Naive thymus-derived CD4-positive, alpha-beta T cell (primary cell): ENCODE measurements at regions of chrX and their contacts with region 1.

Region 1: DNA sequence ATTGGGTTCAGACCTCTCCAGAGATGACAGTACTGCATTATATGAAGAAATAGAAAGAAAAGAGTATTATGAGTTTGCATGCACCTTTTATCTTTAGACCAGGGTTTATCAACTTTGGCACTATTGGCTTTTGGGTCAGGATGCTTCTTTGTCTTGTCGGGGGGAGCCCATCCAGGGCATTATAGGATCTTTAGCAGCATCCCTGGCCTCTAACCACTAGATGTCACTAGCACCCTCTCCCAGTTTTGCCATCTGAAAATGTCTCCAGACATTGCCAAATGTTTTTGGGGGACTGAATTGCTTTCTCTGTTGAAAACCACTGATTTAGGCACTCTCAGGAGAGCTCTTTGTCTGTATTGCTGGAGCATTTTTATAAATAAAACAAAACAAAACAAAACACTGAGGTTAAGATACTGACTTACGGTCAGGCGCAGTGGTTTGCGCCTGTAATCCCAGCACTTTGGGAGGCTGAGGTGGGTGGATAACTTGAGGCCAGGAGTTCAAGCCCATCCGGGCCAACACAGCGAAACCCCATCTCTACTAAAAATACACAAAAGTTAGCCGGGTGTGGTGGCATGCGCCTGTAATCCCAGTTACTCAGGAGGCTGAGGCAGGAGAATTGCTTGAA is 23.6 kb downstream of the CA5B start:
- DNase-seq: peak in 7 of 9 donors; percentile 6 to 54 (median 43)
- ATAC-seq: peak; percentile 75
- H3K4me3 ChIP-seq: no peak overlapping the region
- H3K4me3 Mint-ChIP-seq: no peak overlapping the region
- H3K27ac ChIP-seq: peak overlapping the region; percentile 6
- H3K27ac Mint-ChIP-seq: peak overlapping the region in 8 of 9 donors; percentile 37 to 77 (median 68)
- H3K4me1 ChIP-seq: peaks cover 13 to 18% of the 10 kb centered on the region in 2 donors
- H3K4me1 Mint-ChIP-seq: peaks cover 11 to 49% (median 31%) of the 10 kb centered on the region in 7 donors
- H3K27me3 ChIP-seq: no peaks in the 10 kb centered on the region
- H3K27me3 Mint-ChIP-seq: no peaks in the 10 kb centered on the region

Region 2: DNA sequence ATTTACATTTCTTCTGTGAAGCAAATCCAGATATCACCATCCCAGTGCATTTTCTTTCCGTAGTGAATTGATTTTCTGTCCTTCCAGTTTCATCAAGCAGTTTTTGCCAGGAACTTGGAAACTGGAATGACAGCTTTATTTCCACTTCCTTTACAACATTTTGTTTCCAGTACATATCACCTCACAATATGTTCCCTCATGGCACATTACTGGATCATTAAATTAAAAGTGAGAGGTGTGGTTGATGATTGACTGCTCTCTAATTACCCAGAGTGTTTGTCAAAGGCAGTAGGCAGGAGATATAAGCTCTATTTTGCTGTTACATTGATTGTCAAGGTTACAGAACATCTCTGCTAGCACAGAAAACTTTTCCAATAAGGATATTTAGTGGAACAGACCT is 138.6 kb before region 1 on chrX:
- CTCF ChIA-PET with region 1: no interaction called
- POLR2A ChIA-PET with region 1: no interaction called
- intact Hi-C with region 1: no loop called
- DNase-seq: no peak
- ATAC-seq: no peak
- H3K4me3 ChIP-seq: no peak overlapping the region
- H3K4me3 Mint-ChIP-seq: no peak overlapping the region
- H3K27ac ChIP-seq: no peak overlapping the region
- H3K27ac Mint-ChIP-seq: no peak overlapping the region
- H3K4me1 ChIP-seq: no peaks in the 10 kb centered on the region
- H3K4me1 Mint-ChIP-seq: no peaks in the 10 kb centered on the region
- H3K27me3 ChIP-seq: no peaks in the 10 kb centered on the region
- H3K27me3 Mint-ChIP-seq: no peaks in the 10 kb centered on the region

Region 3: DNA sequence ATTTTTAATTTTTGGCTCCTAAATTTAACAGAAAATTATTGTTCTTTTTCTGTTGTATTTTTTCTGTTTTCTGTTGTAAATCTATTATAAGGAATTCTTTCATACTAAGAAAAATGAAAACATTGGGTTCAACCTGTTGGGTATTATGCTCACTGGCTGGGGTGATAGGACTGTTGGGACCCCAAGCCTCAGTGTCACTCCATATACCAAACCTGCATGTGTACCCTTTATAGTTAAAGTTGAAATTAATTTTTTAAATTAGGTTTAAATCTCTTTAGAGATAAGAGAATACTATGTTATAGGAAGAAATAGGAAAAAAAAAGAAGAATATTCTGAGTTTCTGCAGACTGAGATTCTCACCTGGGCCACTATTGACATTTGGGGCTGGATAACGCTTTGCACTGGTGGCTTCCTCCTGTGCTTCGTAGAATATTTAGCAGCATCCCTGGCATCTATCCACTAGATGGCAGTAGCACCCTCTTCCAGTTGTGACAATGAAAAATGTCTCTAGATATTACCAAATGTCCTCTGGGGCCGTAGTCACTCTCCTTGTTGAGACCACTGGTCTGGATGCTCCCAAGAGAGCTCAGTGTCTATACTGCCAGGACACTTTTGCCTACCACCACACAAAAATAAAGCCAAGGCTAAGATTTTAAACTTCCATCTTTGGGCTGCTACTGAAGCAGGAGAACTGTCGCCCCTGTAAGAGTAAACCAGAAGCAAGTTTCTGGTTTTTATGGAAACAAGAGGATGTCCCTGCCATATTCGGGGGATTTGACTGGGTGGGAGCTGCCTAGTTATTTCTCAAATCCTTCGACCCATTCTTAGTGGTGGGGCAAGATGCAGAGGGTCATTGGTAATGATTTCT is 74.6 kb before region 1 on chrX:
- CTCF ChIA-PET with region 1: interaction called, 3 read pairs
- POLR2A ChIA-PET with region 1: no interaction called
- intact Hi-C with region 1: loop called (anchors 1 to 2 kb)
- DNase-seq: peak; percentile 9 to 78 (median 59)
- ATAC-seq: peak; percentile 95
- H3K4me3 ChIP-seq: no peak overlapping the region
- H3K4me3 Mint-ChIP-seq: no peak overlapping the region
- H3K27ac ChIP-seq: no peak overlapping the region
- H3K27ac Mint-ChIP-seq: peak overlapping the region in 7 of 9 donors; percentile 29 to 86 (median 67)
- H3K4me1 ChIP-seq: no peaks in the 10 kb centered on the region
- H3K4me1 Mint-ChIP-seq: peaks cover 0 to 14% (median 13%) of the 10 kb centered on the region in 7 donors
- H3K27me3 ChIP-seq: no peaks in the 10 kb centered on the region
- H3K27me3 Mint-ChIP-seq: no peaks in the 10 kb centered on the region

Region 4: DNA sequence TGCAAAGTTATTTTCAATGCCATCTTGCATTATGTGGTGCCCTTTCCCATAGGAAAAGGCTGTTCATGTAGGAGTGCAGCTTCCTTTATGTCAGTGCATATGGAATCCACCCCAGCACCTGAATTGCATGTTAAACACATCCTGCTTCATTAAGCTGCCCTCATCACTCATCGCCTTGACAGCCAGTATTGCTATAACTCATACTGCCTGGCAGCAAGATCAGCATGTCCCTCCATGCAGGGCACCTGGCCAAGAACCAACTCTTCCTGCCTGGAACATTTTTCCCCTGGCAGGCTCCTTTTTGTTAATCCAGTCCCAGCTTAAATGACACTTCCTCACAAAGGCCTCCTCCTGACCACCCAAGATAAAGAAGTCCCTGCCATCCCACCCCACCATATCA is 47.1 kb before region 1 on chrX:
- CTCF ChIA-PET with region 1: no interaction called
- POLR2A ChIA-PET with region 1: no interaction called
- intact Hi-C with region 1: no loop called
- DNase-seq: no peak
- ATAC-seq: no peak
- H3K4me3 ChIP-seq: no peak overlapping the region
- H3K4me3 Mint-ChIP-seq: no peak overlapping the region
- H3K27ac ChIP-seq: no peak overlapping the region
- H3K27ac Mint-ChIP-seq: no peak overlapping the region
- H3K4me1 ChIP-seq: no peaks in the 10 kb centered on the region
- H3K4me1 Mint-ChIP-seq: peaks cover 0 to 4% (median 0%) of the 10 kb centered on the region in 7 donors
- H3K27me3 ChIP-seq: no peaks in the 10 kb centered on the region
- H3K27me3 Mint-ChIP-seq: no peaks in the 10 kb centered on the region

Region 5: DNA sequence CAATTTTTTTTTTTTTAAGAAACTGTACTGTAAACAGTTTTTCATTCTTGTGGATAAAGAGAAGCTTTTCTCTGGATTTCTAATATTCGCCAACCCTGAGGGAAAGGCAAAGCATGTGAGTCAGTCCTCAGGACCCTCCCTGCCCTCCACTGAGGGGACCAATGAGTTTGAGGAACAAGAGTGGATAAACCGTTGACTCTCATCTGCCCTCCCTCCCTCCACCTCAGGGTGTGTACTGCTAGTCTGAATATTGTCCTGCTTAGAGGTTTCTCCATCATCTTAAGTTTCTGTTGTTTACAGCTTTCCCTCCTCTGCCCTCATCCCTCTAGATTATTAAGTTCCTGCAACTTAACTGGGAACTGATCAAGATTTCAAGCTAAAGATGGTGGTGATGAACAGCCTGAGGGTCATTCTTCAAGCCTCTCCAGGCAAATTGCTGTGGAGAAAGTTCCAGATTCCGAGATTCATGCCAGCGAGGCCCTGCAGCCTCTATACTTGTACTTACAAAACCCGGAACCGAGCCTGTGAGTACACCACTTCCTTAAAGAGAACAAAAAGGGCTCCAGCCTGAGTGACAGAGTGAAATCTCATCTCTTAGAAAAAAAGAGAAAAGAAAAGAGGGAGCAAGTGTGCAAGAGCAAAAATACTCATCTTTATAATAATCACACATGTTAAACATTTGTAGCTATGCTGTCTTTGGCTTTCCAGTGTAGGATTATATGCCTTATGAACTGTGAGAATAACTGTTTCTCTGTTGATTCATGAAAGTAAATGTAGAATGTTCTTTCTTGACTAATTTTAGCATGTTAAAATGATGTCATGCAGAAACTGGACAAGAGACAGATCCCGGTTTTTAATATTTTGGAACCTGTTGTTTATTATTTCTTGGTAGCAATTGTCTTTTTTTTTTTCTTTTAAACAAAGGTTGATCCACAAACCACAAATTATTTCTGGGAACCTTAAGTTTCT is 11.8 kb before region 1 on chrX:
- CTCF ChIA-PET with region 1: interaction called, 4 read pairs
- POLR2A ChIA-PET with region 1: interaction called, 13 read pairs
- intact Hi-C with region 1: loop called (anchors 1 kb)
- DNase-seq: peak in 7 of 9 donors; percentile 20 to 61 (median 52)
- ATAC-seq: peak; percentile 55
- H3K4me3 ChIP-seq: peak overlapping the region; percentile 43
- H3K4me3 Mint-ChIP-seq: peak overlapping the region; percentile 60 to 86 (median 77)
- H3K27ac ChIP-seq: peak overlapping the region; percentile 89
- H3K27ac Mint-ChIP-seq: peak overlapping the region; percentile 92 to 99 (median 97)
- H3K4me1 ChIP-seq: peaks cover 51 to 55% of the 10 kb centered on the region in 2 donors
- H3K4me1 Mint-ChIP-seq: peaks cover 36 to 97% (median 82%) of the 10 kb centered on the region in 7 donors
- H3K27me3 ChIP-seq: no peaks in the 10 kb centered on the region
- H3K27me3 Mint-ChIP-seq: no peaks in the 10 kb centered on the region

Region 6: GRCh38 chrX:15864629-15865028 is 103.0 kb after region 1 on chrX:
- CTCF ChIA-PET with region 1: no interaction called
- POLR2A ChIA-PET with region 1: no interaction called
- intact Hi-C with region 1: no loop called
- DNase-seq: no peak
- ATAC-seq: no peak
- H3K4me3 ChIP-seq: no peak overlapping the region
- H3K4me3 Mint-ChIP-seq: no peak overlapping the region
- H3K27ac ChIP-seq: no peak overlapping the region
- H3K27ac Mint-ChIP-seq: no peak overlapping the region
- H3K4me1 ChIP-seq: no peaks in the 10 kb centered on the region
- H3K4me1 Mint-ChIP-seq: no peaks in the 10 kb centered on the region
- H3K27me3 ChIP-seq: no peaks in the 10 kb centered on the region
- H3K27me3 Mint-ChIP-seq: peaks cover 0 to 3% (median 0%) of the 10 kb centered on the region in 5 donors

Region 7: DNA sequence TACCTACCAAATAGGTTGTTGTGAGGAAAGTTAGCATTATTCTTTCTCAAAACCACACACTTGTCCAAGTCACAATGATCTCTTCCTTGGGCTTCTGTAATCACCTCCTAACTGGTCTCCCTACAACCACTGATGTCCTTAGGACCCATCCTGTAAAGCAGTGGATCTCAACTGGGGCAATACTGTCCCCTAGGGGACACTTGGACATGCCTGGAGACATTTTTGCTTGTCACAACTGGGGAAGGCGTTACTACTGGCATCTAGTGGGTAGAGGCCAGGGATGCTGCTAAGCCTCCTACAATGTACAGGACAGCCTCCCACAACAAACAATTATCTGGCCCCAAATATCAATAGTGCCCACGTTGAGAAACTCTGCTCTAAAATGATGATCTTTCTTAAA is 211.6 kb after region 1 on chrX:
- CTCF ChIA-PET with region 1: no interaction called
- POLR2A ChIA-PET with region 1: no interaction called
- intact Hi-C with region 1: loop called in 1 of 2 experiments (anchors 2 kb)
- DNase-seq: peak in 3 of 9 donors; percentile 1 to 14 (median 2)
- ATAC-seq: peak; percentile 54
- H3K4me3 ChIP-seq: no peak overlapping the region
- H3K4me3 Mint-ChIP-seq: no peak overlapping the region
- H3K27ac ChIP-seq: no peak overlapping the region
- H3K27ac Mint-ChIP-seq: no peak overlapping the region
- H3K4me1 ChIP-seq: no peaks in the 10 kb centered on the region
- H3K4me1 Mint-ChIP-seq: peaks cover 0 to 7% (median 0%) of the 10 kb centered on the region in 7 donors
- H3K27me3 ChIP-seq: no peaks in the 10 kb centered on the region
- H3K27me3 Mint-ChIP-seq: peaks cover 0 to 2% (median 0%) of the 10 kb centered on the region in 5 donors

Region 8: GRCh38 chrX:16212436-16212835 is 450.8 kb after region 1 on chrX:
- CTCF ChIA-PET with region 1: no interaction called
- POLR2A ChIA-PET with region 1: no interaction called
- intact Hi-C with region 1: loop called in 1 of 2 experiments (anchors 2 kb)
- DNase-seq: no peak
- ATAC-seq: no peak
- H3K4me3 ChIP-seq: no peak overlapping the region
- H3K4me3 Mint-ChIP-seq: no peak overlapping the region
- H3K27ac ChIP-seq: no peak overlapping the region
- H3K27ac Mint-ChIP-seq: no peak overlapping the region
- H3K4me1 ChIP-seq: no peaks in the 10 kb centered on the region
- H3K4me1 Mint-ChIP-seq: peaks cover 0 to under 1% (median 0%) of the 10 kb centered on the region in 7 donors
- H3K27me3 ChIP-seq: no peaks in the 10 kb centered on the region
- H3K27me3 Mint-ChIP-seq: peaks cover 0 to under 1% (median 0%) of the 10 kb centered on the region in 5 donors

Region 9: GRCh38 chrX:16445166-16445752 is 683.6 kb after region 1 on chrX:
- CTCF ChIA-PET with region 1: no interaction called
- POLR2A ChIA-PET with region 1: no interaction called
- intact Hi-C with region 1: loop called in 1 of 2 experiments (anchors 5 kb)
- DNase-seq: peak; percentile 6 to 57 (median 29)
- ATAC-seq: peak; percentile 72
- H3K4me3 ChIP-seq: no peak overlapping the region
- H3K4me3 Mint-ChIP-seq: no peak overlapping the region
- H3K27ac ChIP-seq: no peak overlapping the region
- H3K27ac Mint-ChIP-seq: no peak overlapping the region
- H3K4me1 ChIP-seq: peaks cover 0 to 17% of the 10 kb centered on the region in 2 donors
- H3K4me1 Mint-ChIP-seq: peaks cover 0 to 39% (median 24%) of the 10 kb centered on the region in 7 donors
- H3K27me3 ChIP-seq: no peaks in the 10 kb centered on the region
- H3K27me3 Mint-ChIP-seq: peaks cover 0 to 3% (median 0%) of the 10 kb centered on the region in 5 donors